Activated T-helper 1 cell treated with anti-CD3 and anti-CD28 coated beads, Interleukin-12 subunit alpha, Interleukin-12 subunit beta, Interleukin-2, Interleukin-4 antibody, amounts not matched to agents 30 ng/mL and 10 ng/mL and 1 ng/mL, durations not matched to agents 14 hours and 24 hours and 36 hours (primary cell): ENCODE measurements at regions of chr19 and their contacts with region 1.

Region 1: GRCh38 chr19:43446746-43447489 is 18.5 kb downstream of the LYPD3 start:
- DNase-seq: peak; percentile 68
- H3K4me3 Mint-ChIP-seq: no peak overlapping the region
- H3K27ac Mint-ChIP-seq: no peak overlapping the region
- H3K4me1 Mint-ChIP-seq: peaks cover 29% of the 10 kb centered on the region
- H3K27me3 Mint-ChIP-seq: no peaks in the 10 kb centered on the region

Region 2: DNA sequence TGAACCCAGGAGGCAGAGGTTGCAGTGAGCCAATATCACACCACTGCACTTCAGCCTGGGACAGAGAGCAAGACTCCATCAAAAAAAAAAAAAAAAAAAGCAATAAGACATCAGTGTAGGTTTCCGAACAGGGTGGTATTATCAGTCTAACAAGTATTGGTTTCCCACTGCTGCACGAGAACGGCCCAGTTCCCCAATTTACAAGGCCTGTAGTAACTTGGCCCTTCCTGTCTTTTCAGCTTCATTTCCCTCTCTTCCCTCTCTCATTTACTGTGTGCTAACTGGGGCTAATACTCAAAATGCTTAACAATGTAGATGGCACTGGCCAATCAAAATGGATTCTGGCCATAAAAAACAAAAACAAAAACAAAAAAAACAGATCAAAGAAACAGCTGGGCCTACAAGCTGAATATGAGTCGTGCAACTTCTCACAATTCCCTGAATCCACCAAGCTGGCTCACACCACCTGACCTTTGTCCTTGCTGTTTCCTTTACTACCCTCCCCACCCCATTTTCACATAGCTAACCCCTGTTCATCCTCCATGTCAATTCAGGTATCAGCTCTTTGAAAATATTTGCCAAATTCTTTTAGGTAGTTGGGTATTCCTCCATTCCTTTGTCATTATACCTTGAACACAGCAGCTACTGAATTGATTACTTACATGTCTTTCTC is 29.8 kb before region 1 on chr19:
- intact Hi-C with region 1: no loop called
- DNase-seq: no peak
- H3K4me3 Mint-ChIP-seq: no peak overlapping the region
- H3K27ac Mint-ChIP-seq: no peak overlapping the region
- H3K4me1 Mint-ChIP-seq: no peaks in the 10 kb centered on the region
- H3K27me3 Mint-ChIP-seq: no peaks in the 10 kb centered on the region

Region 3: DNA sequence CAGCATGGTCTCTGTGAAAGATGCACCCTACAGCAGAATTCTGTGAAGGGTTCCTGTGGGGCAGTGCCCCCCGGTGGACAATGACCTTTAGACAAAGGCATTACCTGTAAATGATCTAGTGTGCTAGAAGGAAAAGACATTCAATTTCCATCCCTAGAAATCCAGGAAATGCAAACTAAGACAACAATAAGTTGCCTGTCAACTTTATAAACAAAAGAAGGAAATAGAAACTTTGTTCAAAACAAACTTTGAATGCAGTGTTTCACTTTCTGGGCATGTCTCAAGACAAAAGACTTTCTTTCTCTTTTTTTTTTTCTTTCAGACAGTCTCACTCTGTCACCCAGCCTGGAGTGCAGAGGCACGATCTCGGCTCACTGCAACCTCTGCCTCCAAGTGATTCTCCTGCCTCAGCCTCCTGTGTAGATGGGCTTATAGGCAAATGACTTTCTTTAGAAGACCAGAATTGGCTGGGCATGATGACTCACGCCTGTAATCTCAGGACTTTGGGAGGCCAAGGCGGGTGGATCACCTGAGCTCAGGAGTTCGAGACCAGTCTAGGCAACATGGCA is 16.7 kb before region 1 on chr19:
- intact Hi-C with region 1: loop called (anchors 2 kb)
- DNase-seq: no peak
- H3K4me3 Mint-ChIP-seq: peak overlapping the region; percentile 30
- H3K27ac Mint-ChIP-seq: peak overlapping the region; percentile 44
- H3K4me1 Mint-ChIP-seq: peaks cover 29% of the 10 kb centered on the region
- H3K27me3 Mint-ChIP-seq: peaks cover 9% of the 10 kb centered on the region

Region 4: GRCh38 chr19:43474986-43475705 is 28.2 kb after region 1 on chr19:
- intact Hi-C with region 1: loop called (anchors 1 kb)
- DNase-seq: peak; percentile 91
- H3K4me3 Mint-ChIP-seq: peak overlapping the region; percentile 77
- H3K27ac Mint-ChIP-seq: peak overlapping the region; percentile 89
- H3K4me1 Mint-ChIP-seq: peaks cover 14% of the 10 kb centered on the region
- H3K27me3 Mint-ChIP-seq: no peaks in the 10 kb centered on the region

Region 5: DNA sequence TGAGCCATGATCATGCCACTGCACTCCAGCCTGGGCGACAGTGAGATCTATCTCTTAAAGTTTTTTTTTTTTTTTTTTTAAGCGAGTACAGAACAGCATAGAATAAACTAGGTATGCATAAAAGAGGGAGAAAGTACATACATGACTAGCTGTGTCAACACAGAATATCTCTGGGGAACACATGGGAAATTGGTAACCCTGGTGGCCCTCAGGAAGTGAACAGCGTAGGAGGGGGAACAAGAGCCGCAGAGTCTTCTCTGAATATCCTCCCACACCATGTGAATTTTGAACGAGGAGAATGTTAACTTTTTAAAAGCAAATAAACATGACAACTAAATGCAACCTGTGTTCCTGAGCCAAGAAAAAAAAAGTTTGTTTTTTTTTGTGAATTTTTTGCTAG is 42.4 kb after region 1 on chr19:
- intact Hi-C with region 1: no loop called
- DNase-seq: no peak
- H3K4me3 Mint-ChIP-seq: no peak overlapping the region
- H3K27ac Mint-ChIP-seq: no peak overlapping the region
- H3K4me1 Mint-ChIP-seq: peaks cover 4% of the 10 kb centered on the region
- H3K27me3 Mint-ChIP-seq: no peaks in the 10 kb centered on the region

Region 6: DNA sequence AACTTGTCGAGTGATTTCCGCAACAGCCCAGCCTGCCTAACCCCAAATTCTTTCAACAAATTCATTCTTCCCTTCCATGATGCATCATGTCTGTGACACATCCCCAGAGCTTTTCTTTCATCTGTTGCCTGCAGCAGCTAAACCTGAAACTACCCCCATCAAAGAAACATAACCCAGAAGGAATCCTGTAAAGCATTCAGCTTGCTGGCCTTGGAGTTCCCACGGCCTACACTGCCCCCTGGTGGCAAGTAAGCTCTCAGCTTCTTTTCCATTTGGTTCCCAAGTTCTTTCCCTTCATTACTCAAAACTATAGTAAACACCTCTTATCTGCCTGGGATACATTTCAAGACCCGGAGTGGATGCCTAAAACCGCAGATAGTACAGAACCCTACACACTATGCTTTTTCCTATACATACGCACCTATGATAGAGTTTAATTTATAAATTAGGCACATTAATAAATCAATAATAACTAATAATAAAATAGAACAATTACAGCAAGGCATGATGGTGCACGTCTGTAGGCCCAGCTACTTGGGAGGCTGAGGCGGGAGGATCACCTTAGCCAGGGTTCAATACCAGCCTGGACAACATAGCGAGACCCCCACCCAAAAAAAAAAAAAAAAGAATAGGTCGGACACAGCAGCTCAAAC is 72.6 kb after region 1 on chr19:
- intact Hi-C with region 1: loop called (anchors 1 kb)
- DNase-seq: peak; percentile 63
- H3K4me3 Mint-ChIP-seq: peak overlapping the region; percentile 1
- H3K27ac Mint-ChIP-seq: peak overlapping the region; percentile 32
- H3K4me1 Mint-ChIP-seq: peaks cover 14% of the 10 kb centered on the region
- H3K27me3 Mint-ChIP-seq: no peaks in the 10 kb centered on the region

Region 7: DNA sequence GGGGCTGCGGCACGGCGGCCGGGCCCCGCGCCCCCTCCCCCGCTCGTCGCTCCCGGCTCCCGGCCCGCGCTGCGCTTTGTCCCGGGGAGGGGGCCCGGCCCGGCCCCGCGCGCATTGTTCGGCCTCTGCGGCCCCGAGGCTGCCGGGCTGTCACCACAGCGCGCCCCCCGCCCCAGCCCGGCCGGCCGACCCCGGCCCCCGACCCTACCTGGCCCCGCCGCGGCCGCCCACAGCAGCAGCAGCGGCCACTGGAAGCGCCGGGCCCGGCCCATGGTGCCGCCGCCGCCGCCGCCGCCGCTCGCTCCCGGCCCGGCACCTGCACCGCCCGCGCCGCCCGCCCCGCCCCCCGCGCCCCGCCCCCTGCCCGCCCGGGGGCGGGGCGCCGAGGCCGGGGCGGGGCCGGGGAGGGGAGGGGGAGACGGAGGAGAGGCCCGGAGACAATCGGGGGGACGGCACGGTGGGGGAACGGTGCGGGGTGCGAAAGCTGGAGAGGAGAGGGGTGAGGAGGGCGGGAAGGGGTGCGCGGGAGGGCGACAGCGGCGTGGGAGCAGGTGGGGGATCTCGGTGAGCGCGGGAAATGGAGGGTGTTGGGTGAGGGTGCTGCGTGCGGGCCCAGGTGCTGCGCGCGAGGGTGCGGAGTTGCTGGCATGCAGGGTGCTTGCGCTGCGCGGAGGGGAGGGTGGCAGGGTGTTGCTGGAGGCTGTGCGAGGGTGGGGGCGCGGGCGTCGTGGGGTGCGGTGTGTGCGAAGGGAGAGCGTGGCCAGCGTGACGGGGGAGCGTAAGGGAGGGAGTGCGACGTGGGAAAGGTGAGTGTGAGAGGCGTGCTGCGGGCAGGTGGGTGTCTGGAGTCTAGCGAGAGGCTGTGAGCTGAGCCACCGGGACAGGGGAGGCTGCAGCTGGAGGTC is 192.9 kb after region 1 on chr19 and contains the start of gene CADM4:
- intact Hi-C with region 1: loop called (anchors 10 kb)
- DNase-seq: peak; percentile 30
- H3K4me3 Mint-ChIP-seq: peak within 1 kb of the TSS; percentile 80
- H3K27ac Mint-ChIP-seq: peak within 1 kb of the TSS; percentile 46
- H3K4me1 Mint-ChIP-seq: no peaks in the 10 kb centered on the region
- H3K27me3 Mint-ChIP-seq: peaks cover 41% of the 10 kb centered on the region
- total RNA-seq, gene CADM4: 0.32 and 0.39 TPM in 2 replicates